HEK293T (cell line): ENCODE measurements at regions of chr22 and their contacts with region 1.

Region 1: GRCh38 chr22:49970528-49971231 is 10.1 kb downstream of the PIM3 start:
- DNase-seq: peak; percentile 60

Region 2: GRCh38 chr22:49800408-49801238 is 170.1 kb before region 1 on chr22:
- CTCF ChIA-PET with region 1: no interaction called
- POLR2A ChIA-PET with region 1: no interaction called
- DNase-seq: no peak

Region 3: DNA sequence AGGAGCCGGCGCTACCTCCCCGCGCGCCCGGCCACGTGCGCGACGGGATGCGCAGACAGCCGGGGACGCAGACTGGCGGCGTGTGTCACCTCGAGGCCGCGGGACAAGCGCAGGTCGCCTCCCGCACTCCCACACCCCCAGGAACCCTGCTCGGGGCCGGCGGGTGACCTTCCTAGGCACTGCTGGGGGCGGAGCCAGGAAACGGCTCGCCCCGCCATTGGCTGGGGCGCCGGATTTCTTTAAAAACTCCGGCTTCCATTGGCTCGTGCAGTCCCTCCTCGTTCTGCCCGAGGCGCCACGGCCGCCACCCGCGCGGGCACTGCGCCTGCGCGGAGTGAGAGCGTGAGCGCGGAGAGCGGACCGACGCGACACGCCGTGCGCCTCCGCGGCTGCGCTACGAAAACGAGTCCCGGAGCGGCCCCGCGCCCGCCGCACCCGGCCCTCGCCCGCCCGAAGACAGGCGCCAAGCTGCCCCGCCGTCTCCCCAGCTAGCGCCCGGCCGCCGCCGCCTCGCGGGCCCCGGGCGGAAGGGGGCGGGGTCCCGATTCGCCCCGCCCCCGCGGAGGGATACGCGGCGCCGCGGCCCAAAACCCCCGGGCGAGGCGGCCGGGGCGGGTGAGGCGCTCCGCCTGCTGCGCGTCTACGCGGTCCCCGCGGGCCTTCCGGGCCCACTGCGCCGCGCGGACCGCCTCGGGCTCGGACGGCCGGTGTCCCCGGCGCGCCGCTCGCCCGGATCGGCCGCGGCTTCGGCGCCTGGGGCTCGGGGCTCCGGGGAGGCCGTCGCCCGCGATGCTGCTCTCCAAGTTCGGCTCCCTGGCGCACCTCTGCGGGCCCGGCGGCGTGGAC is 10.3 kb before region 1 on chr22 and contains the start of gene PIM3:
- CTCF ChIA-PET with region 1: no interaction called
- POLR2A ChIA-PET with region 1: interaction called, 10 read pairs
- DNase-seq: peak; percentile 95

Region 4: GRCh38 chr22:49988536-49988935 is 17.9 kb after region 1 on chr22:
- CTCF ChIA-PET with region 1: no interaction called
- POLR2A ChIA-PET with region 1: no interaction called
- DNase-seq: no peak

Region 5: GRCh38 chr22:49999063-49999945 is 28.6 kb after region 1 on chr22:
- CTCF ChIA-PET with region 1: no interaction called
- POLR2A ChIA-PET with region 1: no interaction called
- DNase-seq: peak; percentile 83